SK-N-SH (cell line): ENCODE measurements at regions of chr14 and their contacts with region 1.

Region 1: DNA sequence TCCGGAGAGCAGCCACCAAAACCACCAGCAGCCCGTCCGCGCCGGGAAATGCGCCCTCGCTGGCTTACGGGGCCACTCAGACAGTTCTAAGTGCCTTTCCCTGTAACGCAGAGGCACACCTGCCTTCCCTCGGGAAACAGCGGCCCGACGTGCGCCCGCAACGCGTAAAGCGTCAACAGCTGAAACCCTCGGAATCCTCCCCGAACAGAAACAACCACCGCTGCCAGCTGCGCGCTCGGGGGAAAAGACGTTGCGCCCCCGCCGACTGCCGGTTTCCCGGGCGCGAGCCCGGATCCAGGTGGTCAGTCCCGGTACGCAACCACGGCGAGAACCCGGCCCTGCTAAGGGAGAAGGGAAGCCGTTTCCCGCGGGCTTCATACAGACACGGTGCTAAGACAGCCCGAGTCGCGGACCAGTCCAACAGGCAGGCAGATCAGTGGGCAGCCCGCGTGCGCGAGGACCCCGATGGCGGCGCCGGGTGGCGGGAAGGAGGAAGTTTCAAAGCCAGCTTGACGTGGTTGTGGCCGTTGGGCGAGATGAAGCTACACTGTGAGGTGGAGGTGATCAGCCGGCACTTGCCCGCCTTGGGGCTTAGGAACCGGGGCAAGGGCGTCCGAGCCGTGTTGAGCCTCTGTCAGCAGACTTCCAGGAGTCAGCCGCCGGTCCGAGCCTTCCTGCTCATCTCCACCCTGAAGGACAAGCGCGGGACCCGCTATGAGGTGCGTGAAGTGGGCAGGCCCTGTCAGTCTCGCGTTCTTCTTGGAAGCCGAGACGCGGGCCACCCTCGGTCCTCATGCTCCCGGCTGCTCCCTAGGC is at the start of gene LRR1:
- DNase-seq: peak; percentile 88
- H3K4me3 ChIP-seq: peak within 1 kb of the TSS; percentile 74 to 85
- H3K27ac ChIP-seq: peak within 1 kb of the TSS; percentile 94 to 97
- H3K4me1 ChIP-seq: peaks cover 2 to 3% of the 10 kb centered on the region in 2 experiments; a peak in 2 of 4 replicates
- H3K27me3 ChIP-seq: no peaks in the 10 kb centered on the region
- CTCF ChIP-seq: no peak
- EP300 ChIP-seq: no peak
- RAD21 ChIP-seq: no peak
- polyA plus RNA-seq, gene LRR1: 9.3 and 9.5 TPM in 2 replicates

Region 2: GRCh38 chr14:49574038-49574437 is 24.7 kb before region 1 on chr14:
- CTCF ChIA-PET with region 1: no interaction called
- POLR2A ChIA-PET with region 1: no interaction called
- DNase-seq: no peak
- H3K4me3 ChIP-seq: no peak overlapping the region
- H3K27ac ChIP-seq: no peak overlapping the region
- H3K4me1 ChIP-seq: no peaks in the 10 kb centered on the region; a peak in 1 of 4 replicates
- H3K27me3 ChIP-seq: no peaks in the 10 kb centered on the region
- CTCF ChIP-seq: no peak
- EP300 ChIP-seq: no peak
- RAD21 ChIP-seq: no peak

Region 3: DNA sequence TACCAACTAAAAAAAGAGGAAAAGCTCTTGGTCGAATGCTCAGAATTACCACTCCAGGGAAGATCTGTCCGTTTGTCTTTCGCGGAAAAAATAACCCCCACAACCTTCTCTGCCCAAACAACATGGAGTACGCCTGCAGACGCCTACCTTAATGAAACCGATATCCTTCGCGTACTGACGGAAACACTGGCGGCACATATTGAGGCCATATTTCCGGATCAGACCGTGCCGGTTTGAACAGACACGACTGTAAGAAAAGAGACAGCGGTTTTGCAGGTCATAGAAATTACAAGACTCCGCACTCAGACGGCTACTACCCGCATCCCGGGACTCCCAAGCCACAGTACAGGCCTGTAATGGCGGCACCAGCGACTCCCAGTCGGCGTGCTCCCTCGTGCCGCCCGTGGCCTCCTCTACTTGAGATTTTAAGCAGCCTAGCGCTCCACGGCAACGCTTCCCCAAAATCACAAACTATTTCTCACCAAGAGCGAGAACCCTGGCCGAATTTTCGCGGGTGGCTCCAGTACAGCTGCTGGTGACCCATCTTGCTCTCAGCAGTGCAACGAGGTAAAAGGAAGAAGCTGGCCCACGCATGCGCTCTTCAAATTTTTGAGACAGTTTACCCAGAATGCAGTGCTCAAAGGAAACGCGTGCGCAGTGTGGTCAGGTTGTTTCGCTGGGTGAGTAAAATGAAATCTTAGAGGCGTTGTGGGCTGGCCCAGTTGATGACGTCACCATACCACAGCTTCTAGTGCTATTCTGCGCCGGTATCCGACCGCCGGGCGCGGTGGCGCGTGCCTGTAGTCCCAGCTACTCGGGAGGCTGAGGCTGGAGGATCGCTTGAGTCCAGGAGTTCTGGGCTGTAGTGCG is 12.7 kb before region 1 on chr14 and contains the start of gene RPS29:
- CTCF ChIA-PET with region 1: interaction called, 51 read pairs
- POLR2A ChIA-PET with region 1: interaction called, 19 read pairs
- DNase-seq: peak; percentile 89
- H3K4me3 ChIP-seq: peak within 1 kb of the TSS; percentile 72 to 91
- H3K27ac ChIP-seq: peak within 1 kb of the TSS; percentile 82 to 84
- H3K4me1 ChIP-seq: peaks cover 3 to 7% of the 10 kb centered on the region in 2 experiments; a peak in 1 of 4 replicates
- H3K27me3 ChIP-seq: no peaks in the 10 kb centered on the region
- CTCF ChIP-seq: no peak
- EP300 ChIP-seq: peak in 1 of 2 experiments; percentile 28; a peak in 1 of 4 replicates
- RAD21 ChIP-seq: no peak
- polyA plus RNA-seq, gene RPS29: 11,220 and 15,074 TPM in 2 replicates

Region 4: DNA sequence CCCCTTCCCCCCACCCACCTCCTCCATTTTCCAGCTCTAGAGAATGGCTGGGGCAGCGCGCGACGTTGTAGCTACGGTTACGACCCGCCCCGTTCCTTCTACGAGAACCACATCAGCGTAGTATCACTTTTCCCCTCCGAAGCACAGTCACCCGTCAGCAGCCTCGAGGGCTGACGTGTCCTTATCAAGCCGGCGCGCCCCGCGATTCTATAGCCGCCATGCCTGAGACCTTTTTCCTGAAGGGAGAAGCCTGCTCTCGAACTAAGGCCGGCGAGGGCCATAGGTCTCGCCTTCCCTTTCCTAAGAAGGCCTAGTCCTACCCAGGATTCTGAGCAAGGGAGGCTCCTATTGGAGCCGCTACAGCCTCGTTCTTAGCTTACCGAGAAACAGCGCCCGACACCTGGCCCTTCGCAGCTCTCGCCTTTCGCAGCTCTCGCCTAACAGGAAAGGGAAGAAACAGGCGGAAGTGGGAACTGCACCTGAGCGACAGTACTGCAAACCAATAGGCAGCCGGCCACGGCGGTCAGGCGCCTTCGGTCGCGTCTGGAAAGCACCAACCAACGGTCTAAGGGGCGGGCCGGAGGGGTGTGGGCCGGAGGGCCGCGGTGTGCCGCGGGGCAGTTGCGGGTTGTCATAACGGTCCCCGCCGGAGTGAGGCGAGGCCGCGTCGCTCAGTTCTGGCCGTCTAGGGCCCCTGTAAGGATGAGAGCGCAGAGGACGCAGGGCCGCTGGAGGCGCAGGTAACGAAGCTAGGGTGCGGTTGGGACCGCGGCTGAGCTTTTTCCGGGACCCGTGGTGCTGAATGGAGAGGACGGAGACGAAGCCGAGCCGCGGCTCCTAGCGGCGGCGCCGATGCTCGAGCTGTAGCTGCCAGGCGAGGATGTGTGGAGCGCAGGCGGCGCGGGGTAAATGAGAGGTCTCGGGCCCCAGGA is 21.8 kb after region 1 on chr14 and contains the starts of genes MGAT2 and RPL36AL:
- CTCF ChIA-PET with region 1: interaction called, 3 read pairs
- POLR2A ChIA-PET with region 1: interaction called, 13 read pairs
- DNase-seq: peak; percentile 99
- H3K4me3 ChIP-seq: peak within 1 kb of the TSS; percentile 92 to 96
- H3K27ac ChIP-seq: peak within 1 kb of the TSS; percentile 97 to 98
- H3K4me1 ChIP-seq: peaks cover 22 to 29% of the 10 kb centered on the region in 2 experiments
- H3K27me3 ChIP-seq: no peaks in the 10 kb centered on the region
- CTCF ChIP-seq: peak; percentile 45
- EP300 ChIP-seq: no peak
- RAD21 ChIP-seq: no peak
- polyA plus RNA-seq, gene MGAT2: 20.6 and 22.0 TPM in 2 replicates
- polyA plus RNA-seq, gene RPL36AL: 260 and 337 TPM in 2 replicates